HEK293 (cell line): ENCODE measurements at regions of chr7 and their contacts with region 1.

Region 1: GRCh38 chr7:97117372-97118188 is at the start of gene SDHAF3:
- H3K4me3 ChIP-seq: peak within 1 kb of the TSS; percentile 59
- H3K27ac ChIP-seq: peak within 1 kb of the TSS; percentile 61
- H3K4me1 ChIP-seq: no peaks in the 10 kb centered on the region
- CTCF ChIP-seq: peak; percentile 97

Region 2: GRCh38 chr7:96359876-96360275 is 757.7 kb before region 1 on chr7:
- CTCF ChIA-PET with region 1: no interaction called
- POLR2A ChIA-PET with region 1: no interaction called
- H3K4me3 ChIP-seq: no peak overlapping the region
- H3K27ac ChIP-seq: no peak overlapping the region
- H3K4me1 ChIP-seq: no peaks in the 10 kb centered on the region
- CTCF ChIP-seq: no peak

Region 3: GRCh38 chr7:97024205-97025126 is 93.1 kb before region 1 on chr7 and contains the start of gene DLX5:
- CTCF ChIA-PET with region 1: no interaction called
- POLR2A ChIA-PET with region 1: no interaction called
- H3K4me3 ChIP-seq: peak within 1 kb of the TSS; percentile 90
- H3K27ac ChIP-seq: peak within 1 kb of the TSS; percentile 79
- H3K4me1 ChIP-seq: no peaks in the 10 kb centered on the region; the same call in 1 of the 2 replicates
- CTCF ChIP-seq: peak; percentile 87

Region 4: DNA sequence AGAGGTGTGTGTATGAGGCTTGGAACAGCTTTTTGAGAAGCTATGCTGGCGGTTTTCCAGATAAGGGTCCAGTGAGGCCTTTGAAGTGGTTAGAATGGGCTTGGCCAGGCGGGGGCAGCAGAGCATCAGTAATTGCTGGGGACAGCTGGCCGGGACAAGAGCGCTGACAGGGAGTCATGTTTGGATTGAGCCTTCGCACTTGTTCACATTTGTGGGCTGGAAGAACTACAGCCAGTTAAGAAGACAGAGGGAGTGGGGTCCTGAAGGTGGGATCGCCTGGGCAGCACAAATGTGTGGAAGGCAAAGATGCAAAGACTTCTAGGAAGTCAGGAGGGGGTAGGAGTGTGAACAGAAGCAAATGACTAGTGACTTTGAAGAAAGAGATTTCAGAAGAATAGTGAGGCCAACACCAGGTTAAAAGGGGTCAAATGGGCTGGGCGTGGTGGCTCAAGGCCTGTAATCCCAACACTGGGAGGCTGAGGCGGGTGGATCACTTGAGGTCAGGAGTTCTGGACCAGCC is 12.8 kb before region 1 on chr7:
- CTCF ChIA-PET with region 1: interaction called, 15 read pairs
- POLR2A ChIA-PET with region 1: interaction called, 9 read pairs
- H3K4me3 ChIP-seq: no peak overlapping the region
- H3K27ac ChIP-seq: no peak overlapping the region
- H3K4me1 ChIP-seq: no peaks in the 10 kb centered on the region
- CTCF ChIP-seq: peak; percentile 83

Region 5: DNA sequence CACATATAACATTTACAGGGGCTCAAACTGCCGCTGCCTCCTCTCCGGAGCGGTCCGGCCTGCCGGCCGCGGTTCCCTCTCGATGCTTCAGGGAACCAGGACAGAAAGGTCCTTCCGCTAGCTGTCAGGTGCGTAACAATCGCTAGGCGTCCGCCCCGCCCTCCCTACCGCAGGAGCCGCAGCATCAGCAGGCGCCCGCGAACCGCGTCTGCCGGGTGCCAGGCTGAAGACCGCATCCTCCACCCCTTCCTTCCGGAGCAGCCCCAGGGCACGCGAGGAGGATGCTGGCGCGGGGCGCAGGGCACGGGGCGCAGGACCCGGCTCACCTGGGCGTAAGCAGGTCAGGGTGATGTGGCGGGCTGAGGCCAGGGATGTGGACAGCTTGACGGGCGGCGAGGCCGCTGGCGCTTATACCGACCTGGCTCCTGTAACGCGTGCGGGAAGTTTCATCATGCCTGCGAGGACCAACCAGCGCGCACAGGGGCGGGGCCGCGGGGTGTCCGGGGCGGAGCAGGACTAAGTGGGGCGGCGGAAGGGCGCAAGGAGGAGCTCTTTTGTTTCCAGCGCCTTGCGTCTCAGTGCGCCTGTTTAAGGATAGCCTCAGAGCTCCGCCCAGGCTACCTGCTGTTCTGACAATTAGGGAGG is 754.6 kb after region 1 on chr7 and contains the start of gene ASNS:
- CTCF ChIA-PET with region 1: no interaction called
- POLR2A ChIA-PET with region 1: interaction called, 10 read pairs
- H3K4me3 ChIP-seq: peak within 1 kb of the TSS; percentile 51
- H3K27ac ChIP-seq: peak within 1 kb of the TSS; percentile 75
- H3K4me1 ChIP-seq: no peaks in the 10 kb centered on the region
- CTCF ChIP-seq: peak; percentile 58; the same call in 1 of the 2 replicates